Activated CD4-positive, alpha-beta memory T cell treated with anti-CD3 and anti-CD28 coated beads for 36 hours (primary cell): ENCODE measurements at regions of chr17 and their contacts with region 1.

Region 1: DNA sequence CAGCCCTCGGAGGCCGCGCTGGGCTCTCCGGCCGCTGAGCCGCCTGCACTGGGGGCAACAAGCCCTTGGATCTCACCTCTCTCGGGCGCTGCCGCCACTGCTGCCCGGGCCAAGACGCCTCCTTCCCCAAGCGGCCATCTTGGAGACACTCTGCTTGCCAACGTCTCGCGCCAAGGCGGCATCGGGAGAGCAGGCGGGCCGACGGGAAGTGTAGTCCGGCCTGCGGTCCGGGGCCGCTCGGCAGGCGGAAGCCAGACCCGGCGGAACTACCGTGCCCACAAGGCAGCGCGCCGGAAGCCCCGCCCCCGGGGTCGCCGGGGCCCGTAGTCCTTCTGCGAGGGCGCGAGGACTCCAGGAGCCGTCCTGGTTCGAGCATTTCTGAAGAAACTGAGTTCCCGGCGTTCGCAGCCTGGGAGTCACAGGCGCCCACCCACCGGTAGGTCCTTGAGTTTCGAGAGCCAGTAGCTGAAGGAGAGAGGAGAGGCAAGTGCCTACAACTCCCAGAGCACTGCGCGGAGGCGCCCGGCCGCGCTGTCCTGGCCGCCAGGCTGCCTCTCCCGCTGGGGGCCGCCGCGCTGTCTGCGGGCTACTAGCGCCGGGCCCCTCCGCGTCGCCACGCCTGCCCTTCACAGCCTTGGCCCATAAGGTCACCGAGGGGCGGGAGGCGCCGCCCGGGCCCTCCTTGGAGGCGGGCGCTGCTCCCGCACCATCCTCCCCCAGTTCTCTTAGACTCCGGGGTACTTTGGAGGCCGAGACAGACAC is at the start of gene TMEM11:
- DNase-seq: peak; percentile 96
- H3K4me3 Mint-ChIP-seq: peak within 1 kb of the TSS; percentile 84
- H3K27ac Mint-ChIP-seq: peak within 1 kb of the TSS; percentile 91
- H3K4me1 Mint-ChIP-seq: peaks cover 68% of the 10 kb centered on the region
- H3K27me3 Mint-ChIP-seq: no peaks in the 10 kb centered on the region
- total RNA-seq, gene TMEM11: 24.0 to 27.2 TPM

Region 2: GRCh38 chr17:21098934-21099689 is 115.1 kb before region 1 on chr17:
- CTCF ChIA-PET with region 1: interaction called, 3 read pairs
- POLR2A ChIA-PET with region 1: no interaction called
- intact Hi-C with region 1: loop called (anchors 1 kb)
- DNase-seq: peak; percentile 87
- H3K4me3 Mint-ChIP-seq: peak overlapping the region; percentile 97
- H3K27ac Mint-ChIP-seq: peak overlapping the region; percentile 88
- H3K4me1 Mint-ChIP-seq: peaks cover 4% of the 10 kb centered on the region
- H3K27me3 Mint-ChIP-seq: no peaks in the 10 kb centered on the region

Region 3: GRCh38 chr17:21252796-21253645 is 38.8 kb after region 1 on chr17 and contains the start of gene NATD1:
- CTCF ChIA-PET with region 1: no interaction called
- POLR2A ChIA-PET with region 1: interaction called, 3 read pairs
- intact Hi-C with region 1: loop called (anchors 2 kb)
- DNase-seq: peak; percentile 86
- H3K4me3 Mint-ChIP-seq: peak within 1 kb of the TSS; percentile 81
- H3K27ac Mint-ChIP-seq: peak within 1 kb of the TSS; percentile 38
- H3K4me1 Mint-ChIP-seq: peaks cover 14% of the 10 kb centered on the region
- H3K27me3 Mint-ChIP-seq: no peaks in the 10 kb centered on the region
- total RNA-seq, gene NATD1: 3.0 to 3.2 TPM